HEK293 (cell line): ENCODE measurements at regions of chr19 and their contacts with region 1.

Region 1: GRCh38 chr19:41449079-41449864 is 6.3 kb downstream of the ERICH4 start:
- H3K4me3 ChIP-seq: peak overlapping the region; percentile 13
- H3K27ac ChIP-seq: no peak overlapping the region; the same call in 1 of the 2 replicates
- H3K4me1 ChIP-seq: no peaks in the 10 kb centered on the region
- CTCF ChIP-seq: peak; percentile 99

Region 2: GRCh38 chr19:41434450-41434849 is 14.8 kb before region 1 on chr19:
- CTCF ChIA-PET with region 1: interaction called, 69 read pairs
- POLR2A ChIA-PET with region 1: interaction called, 26 read pairs
- H3K4me3 ChIP-seq: no peak overlapping the region
- H3K27ac ChIP-seq: no peak overlapping the region
- H3K4me1 ChIP-seq: peaks cover 4% of the 10 kb centered on the region; the same call in 1 of the 2 replicates
- CTCF ChIP-seq: no peak

Region 3: GRCh38 chr19:41495589-41495988 is 46.3 kb after region 1 on chr19:
- CTCF ChIA-PET with region 1: interaction called, 18 read pairs
- POLR2A ChIA-PET with region 1: no interaction called
- H3K4me3 ChIP-seq: no peak overlapping the region
- H3K27ac ChIP-seq: no peak overlapping the region
- H3K4me1 ChIP-seq: peaks cover 2% of the 10 kb centered on the region
- CTCF ChIP-seq: no peak

Region 4: DNA sequence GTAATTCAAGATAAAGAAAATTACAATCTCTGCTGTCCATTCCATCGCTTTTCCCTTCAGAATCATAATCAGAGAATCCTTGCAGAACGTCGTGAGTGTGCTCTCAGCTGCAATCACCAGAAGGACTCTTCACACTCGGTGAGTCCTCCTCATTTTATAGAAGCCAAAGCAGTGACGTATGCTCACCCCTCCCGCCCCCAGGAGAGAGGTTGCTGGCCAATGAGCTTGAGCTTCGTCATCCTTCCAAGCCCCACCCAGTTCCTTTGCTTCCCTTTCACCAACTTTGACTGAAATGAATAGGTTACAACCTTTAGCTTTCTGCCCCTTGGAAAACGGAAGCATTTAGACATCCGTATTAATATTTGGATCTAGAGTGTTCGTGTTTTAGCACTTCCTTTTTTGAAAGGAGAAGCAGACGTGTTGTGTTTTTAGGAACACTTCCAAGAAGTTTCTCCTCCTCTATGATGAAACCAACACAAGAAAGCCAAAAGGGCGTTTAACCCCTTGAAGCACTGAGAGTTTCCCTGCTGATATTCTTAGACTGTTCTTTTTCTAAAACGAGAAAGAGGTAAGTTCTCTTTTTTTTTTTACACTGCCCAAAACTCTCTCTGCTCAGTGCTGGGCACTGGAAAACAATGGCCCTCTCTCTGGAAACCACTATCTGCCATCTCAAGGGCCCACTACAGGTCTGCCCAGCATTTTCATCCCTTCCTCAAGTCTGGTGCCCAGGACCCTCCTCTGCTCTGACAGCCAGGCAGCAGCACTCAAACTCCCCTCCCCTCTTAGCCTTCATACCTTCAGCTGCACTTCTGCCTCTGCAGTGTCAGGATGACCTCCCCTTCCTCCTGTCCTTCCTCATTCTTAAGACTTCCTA is 82.4 kb after region 1 on chr19:
- CTCF ChIA-PET with region 1: interaction called, 28 read pairs
- POLR2A ChIA-PET with region 1: no interaction called
- H3K4me3 ChIP-seq: no peak overlapping the region
- H3K27ac ChIP-seq: peak overlapping the region; percentile 1; the same call in 1 of the 2 replicates
- H3K4me1 ChIP-seq: peaks cover 7% of the 10 kb centered on the region
- CTCF ChIP-seq: no peak

Region 5: DNA sequence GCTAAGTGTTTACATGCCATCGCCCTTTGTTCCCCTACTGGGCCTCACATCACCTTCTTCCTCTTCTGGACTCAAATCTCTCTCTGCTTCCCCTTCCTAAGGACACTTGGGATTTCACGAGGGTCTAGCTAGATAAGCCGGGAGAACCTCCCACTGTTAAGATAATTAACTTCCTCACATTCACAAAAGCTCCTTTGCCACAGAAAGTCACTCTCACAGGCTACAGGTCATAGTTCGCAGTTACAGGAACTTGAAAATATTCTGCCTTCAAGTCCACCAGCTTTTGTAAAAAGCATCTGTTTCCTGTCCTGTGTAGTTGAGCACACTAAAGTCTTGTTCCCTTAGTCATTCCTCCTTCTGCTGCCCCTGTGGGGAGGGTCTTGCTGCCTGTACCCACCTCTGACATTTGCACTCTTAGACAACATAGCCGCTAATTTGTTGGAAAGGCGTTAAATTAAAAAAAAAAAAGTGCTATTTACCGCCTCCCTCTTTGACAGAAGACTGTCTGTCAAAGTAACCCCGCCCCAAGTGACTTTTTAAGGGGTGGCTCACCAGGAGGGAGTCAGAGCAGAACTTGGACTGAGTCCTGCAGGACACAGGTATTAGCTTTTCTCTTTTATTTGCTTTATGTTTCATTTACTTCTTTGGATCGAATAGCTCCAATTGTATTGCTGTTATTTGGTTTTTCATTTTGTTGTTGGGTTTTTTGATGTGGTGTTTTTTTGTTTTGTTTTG is 99.8 kb after region 1 on chr19:
- CTCF ChIA-PET with region 1: interaction called, 23 read pairs
- POLR2A ChIA-PET with region 1: no interaction called
- H3K4me3 ChIP-seq: no peak overlapping the region
- H3K27ac ChIP-seq: peak overlapping the region; percentile 21
- H3K4me1 ChIP-seq: peaks cover 17% of the 10 kb centered on the region
- CTCF ChIP-seq: no peak

Region 6: DNA sequence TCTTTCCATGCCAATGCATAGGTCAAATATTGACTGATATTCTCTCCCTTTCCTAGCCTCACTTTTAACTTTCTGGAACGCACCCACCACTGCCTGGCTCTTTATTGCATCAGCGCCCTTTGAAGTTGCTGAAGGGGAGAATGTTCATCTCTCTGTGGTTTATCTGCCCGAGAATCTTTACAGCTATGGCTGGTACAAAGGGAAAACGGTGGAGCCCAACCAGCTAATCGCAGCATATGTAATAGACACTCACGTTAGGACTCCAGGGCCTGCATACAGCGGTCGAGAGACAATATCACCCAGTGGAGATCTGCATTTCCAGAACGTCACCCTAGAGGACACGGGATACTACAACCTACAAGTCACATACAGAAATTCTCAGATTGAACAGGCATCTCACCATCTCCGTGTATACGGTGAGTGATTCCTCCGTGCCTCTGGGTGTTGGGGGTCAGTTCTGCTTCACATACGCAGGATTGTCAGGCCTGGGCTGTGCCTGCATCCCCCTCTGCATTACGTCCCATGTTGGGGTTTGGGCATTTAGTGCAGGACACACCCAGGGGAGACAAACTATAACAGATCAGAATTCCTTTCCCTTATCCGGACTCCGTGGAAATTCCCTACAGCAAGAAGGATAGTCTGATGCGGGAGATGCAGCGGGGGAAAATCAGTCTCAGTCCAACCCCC is 128.0 kb after region 1 on chr19:
- CTCF ChIA-PET with region 1: interaction called, 433 read pairs
- POLR2A ChIA-PET with region 1: no interaction called
- H3K4me3 ChIP-seq: no peak overlapping the region
- H3K27ac ChIP-seq: no peak overlapping the region
- H3K4me1 ChIP-seq: no peaks in the 10 kb centered on the region
- CTCF ChIP-seq: no peak